ENCODE measurements at regions of chr18 and their contacts with region 1.

Region 1: DNA sequence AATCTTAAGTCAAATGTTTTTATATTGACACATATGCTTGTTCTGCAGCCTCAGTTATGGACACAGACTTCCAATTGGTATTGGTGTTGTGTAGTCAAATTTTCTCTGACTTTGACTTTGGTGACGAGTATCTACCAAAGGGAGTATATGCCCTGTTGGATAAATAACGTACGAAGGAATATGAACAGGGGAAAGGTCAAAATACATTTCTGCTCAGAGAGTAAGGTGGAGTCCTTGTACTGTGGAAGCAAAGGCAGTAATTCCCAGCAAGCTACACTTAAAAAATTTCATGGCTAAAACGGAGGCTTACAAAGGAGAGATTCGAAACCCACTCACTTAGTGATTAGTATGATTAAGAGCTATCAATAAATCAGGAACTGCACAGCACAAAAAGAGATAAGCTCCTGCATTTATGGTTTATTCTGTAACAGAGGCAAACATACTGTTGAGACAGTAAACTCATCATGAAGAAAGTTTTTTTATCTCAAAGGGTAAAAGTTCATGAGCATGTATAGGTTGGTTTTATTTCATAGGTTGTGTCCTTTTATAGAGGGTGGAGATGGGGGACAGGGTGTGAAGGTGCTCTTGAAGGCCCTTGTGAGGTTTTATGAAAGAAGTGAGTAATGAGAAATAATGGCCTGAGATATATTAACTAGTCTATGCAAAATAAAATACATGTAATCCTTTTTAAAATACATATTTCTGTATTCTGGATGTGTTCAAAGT is 142.7 kb downstream of the CD226 start:
- DNase-seq: no peak
- H3K4me3 ChIP-seq: no peak overlapping the region
- H3K27ac ChIP-seq: no peak overlapping the region
- H3K4me1 ChIP-seq: no peaks in the 10 kb centered on the region
- H3K27me3 ChIP-seq: no peaks in the 10 kb centered on the region
- CTCF ChIP-seq: no peak

Region 2: GRCh38 chr18:69865776-69866175 is 60.8 kb after region 1 on chr18:
- CTCF ChIA-PET with region 1: no interaction called
- dilution Hi-C with region 1: no loop called
- in situ Hi-C with region 1: loop called in 1 of 2 experiments (anchors 10 kb)
- intact Hi-C with region 1: no loop called
- DNase-seq: no peak
- H3K4me3 ChIP-seq: no peak overlapping the region
- H3K27ac ChIP-seq: no peak overlapping the region
- H3K4me1 ChIP-seq: no peaks in the 10 kb centered on the region
- H3K27me3 ChIP-seq: no peaks in the 10 kb centered on the region
- CTCF ChIP-seq: no peak

Measured in mammary epithelial cell (primary cell).